OCI-LY7 (cell line): ENCODE measurements at regions of chr19 and their contacts with region 1.

Region 1: DNA sequence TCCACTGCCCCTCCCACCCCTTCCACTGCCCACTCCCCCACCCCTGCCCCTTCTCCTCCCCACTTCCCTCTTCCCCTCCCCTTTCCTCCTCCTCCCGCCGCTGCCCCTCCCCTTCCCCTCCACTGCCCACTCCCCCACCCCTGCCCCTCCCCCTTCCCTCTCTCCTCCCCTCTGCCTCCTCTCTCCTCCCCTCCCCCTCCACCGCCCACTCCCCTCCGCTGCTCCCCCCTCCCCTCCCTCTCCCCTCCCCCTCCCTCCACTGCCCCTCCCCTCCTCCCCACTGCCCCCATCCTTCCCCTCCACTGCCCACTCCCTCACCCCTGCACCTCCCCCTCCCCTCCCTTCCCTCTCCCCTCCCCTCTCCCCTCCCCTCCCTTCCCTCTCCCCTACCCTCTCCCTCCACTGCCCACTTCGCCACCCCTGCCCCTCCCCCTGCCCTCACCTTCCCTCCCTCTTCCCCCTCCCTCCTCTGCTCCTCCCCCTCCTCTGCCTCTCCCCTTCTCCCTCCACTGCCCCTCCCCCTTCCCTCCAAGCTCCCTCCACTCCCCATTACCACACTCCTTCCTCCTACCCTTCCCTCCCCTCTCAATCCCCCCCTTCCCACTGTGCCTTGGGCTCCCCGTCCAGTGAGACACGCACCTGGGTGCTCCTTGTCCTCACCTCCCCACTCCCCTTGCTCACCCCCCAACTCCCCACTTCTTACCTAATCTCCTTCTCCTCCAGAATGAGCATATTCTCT is 21.9 kb downstream of the ATP8B3 start:
- DNase-seq: no peak
- H3K4me3 ChIP-seq: no peak overlapping the region
- H3K27ac ChIP-seq: no peak overlapping the region
- H3K4me1 ChIP-seq: no peaks in the 10 kb centered on the region
- CTCF ChIP-seq: no peak

Region 2: DNA sequence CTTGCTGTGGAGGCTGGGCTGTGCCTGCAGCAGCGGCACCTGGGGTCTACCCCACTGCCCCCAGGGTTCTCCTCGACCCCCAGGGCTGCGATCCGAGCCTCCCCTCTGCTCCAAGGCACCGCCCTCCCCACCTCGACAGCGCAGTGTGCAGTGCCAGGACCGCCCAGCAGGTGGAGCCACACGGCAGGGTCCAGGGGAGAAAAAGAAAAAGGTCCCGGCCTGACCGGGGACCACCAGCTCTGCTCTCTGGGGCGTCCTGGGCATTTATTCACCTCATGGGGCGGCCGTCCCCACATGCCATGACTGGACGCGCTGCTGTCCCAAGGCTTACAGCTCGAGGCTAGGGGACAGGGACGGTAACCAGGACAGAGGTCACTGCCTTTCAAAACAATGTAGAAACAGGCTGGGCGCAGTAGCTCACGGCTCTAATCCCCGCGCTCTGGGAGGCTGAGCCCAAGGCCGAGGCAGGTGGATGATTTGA is 47.4 kb after region 1 on chr19:
- CTCF ChIA-PET with region 1: interaction called, 10 read pairs
- POLR2A ChIA-PET with region 1: no interaction called
- intact Hi-C with region 1: no loop called
- DNase-seq: peak; percentile 50
- H3K4me3 ChIP-seq: no peak overlapping the region
- H3K27ac ChIP-seq: no peak overlapping the region
- H3K4me1 ChIP-seq: peaks cover 3% of the 10 kb centered on the region
- CTCF ChIP-seq: peak; percentile 93